PC-3 (cell line): ENCODE measurements at regions of chr1 and their contacts with region 1.

Region 1: DNA sequence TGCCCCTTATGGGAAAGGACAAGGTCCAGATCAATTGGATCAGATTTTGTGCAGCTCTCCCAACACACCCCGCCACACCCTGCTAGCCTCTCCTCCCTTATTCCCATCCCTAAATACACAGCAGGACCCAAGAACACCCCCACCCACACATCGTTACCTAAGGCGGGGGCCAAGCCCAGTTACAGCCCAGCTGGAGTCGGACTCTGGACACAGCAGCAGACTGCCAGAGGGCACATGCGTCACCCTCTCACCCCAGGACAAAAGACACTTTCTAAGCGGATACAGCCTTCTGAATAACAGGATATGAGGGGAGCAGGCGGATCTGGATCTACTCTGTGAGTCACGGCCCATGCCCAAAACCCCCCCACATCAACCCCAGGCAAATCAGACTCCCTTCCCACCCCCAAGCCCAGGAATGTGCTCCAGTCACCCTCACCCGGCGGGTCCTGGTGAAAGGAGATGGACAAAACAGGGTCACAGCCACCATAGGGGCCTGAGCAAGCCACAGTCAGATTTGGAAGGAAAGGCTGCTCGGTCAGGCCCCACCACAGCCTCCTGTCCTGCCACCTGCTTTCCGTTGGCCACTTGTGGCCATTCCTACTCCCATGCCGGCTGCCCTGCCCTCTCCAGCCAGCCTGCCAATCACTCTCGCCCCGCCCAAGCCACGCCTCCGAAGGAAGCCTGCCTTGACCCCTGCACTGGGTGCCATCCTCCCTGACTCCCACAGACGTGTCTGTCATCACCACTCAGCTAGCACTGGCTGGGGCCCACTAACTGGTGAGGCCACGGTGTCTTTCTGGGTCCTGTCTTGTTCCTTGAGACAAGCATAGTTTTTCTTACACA is 4.0 kb downstream of the S100A16 start:
- DNase-seq: peak; percentile 99
- ATAC-seq: peak; percentile 58
- H3K4me3 ChIP-seq: peak overlapping the region; percentile 68
- H3K27ac ChIP-seq: peak overlapping the region; percentile 100
- H3K4me1 ChIP-seq: peaks cover 50% of the 10 kb centered on the region
- H3K27me3 ChIP-seq: no peaks in the 10 kb centered on the region
- CTCF ChIP-seq: no peak

Region 2: DNA sequence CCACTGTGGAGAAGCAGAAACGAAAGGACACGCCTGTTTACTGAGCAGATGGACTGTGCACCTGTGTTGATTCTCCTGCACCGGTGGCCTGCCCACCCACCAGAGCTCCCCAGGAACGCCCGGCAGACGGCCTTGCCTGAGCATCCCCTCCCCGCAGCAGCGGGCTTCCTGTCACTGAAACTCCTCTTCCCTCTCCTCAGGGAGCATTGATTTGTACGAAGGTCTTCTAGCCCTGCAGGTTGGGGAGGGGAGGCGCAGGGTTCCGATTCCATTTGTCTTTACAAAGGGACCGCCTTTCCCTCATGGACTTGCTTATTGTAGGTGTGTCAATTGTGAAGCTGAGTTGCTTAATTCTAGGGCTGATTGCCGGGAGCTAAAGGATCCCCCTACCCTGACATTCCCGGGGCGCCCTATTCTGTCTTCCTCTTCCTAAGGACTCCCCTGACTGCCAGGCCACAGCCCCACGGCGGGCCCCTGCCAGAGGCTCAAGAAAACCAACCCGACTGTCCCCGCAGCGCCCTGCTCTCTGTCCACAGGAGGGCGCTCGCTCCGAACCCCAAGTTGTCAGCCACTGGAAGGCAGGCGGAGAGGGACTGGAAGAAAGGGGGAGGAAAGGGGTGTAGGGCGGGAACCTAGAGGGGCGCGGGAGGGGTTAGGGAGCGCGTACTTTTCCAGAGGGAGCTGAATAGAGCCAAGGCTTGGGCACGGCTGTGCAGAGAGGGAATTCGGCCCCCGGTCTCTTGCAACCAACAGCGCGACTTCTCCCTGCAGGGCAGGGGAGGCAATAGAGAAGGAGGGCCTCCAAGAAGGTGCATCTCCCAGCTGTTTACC is 76.0 kb before region 1 on chr1:
- CTCF ChIA-PET with region 1: no interaction called
- POLR2A ChIA-PET with region 1: interaction called, 7 read pairs
- intact Hi-C with region 1: loop called (anchors 2 kb)
- DNase-seq: peak; percentile 87
- ATAC-seq: peak; percentile 21
- H3K4me3 ChIP-seq: peak overlapping the region; percentile 28; the same call in 1 of the 2 replicates
- H3K27ac ChIP-seq: peak overlapping the region; percentile 94
- H3K4me1 ChIP-seq: peaks cover 46% of the 10 kb centered on the region
- H3K27me3 ChIP-seq: no peaks in the 10 kb centered on the region
- CTCF ChIP-seq: peak; percentile 96

Region 3: GRCh38 chr1:153598309-153599172 is 10.4 kb before region 1 on chr1:
- CTCF ChIA-PET with region 1: no interaction called
- POLR2A ChIA-PET with region 1: interaction called, 18 read pairs
- intact Hi-C with region 1: no loop called
- DNase-seq: no peak
- ATAC-seq: peak; percentile 26
- H3K4me3 ChIP-seq: no peak overlapping the region
- H3K27ac ChIP-seq: no peak overlapping the region
- H3K4me1 ChIP-seq: no peaks in the 10 kb centered on the region
- H3K27me3 ChIP-seq: no peaks in the 10 kb centered on the region
- CTCF ChIP-seq: no peak

Region 4: DNA sequence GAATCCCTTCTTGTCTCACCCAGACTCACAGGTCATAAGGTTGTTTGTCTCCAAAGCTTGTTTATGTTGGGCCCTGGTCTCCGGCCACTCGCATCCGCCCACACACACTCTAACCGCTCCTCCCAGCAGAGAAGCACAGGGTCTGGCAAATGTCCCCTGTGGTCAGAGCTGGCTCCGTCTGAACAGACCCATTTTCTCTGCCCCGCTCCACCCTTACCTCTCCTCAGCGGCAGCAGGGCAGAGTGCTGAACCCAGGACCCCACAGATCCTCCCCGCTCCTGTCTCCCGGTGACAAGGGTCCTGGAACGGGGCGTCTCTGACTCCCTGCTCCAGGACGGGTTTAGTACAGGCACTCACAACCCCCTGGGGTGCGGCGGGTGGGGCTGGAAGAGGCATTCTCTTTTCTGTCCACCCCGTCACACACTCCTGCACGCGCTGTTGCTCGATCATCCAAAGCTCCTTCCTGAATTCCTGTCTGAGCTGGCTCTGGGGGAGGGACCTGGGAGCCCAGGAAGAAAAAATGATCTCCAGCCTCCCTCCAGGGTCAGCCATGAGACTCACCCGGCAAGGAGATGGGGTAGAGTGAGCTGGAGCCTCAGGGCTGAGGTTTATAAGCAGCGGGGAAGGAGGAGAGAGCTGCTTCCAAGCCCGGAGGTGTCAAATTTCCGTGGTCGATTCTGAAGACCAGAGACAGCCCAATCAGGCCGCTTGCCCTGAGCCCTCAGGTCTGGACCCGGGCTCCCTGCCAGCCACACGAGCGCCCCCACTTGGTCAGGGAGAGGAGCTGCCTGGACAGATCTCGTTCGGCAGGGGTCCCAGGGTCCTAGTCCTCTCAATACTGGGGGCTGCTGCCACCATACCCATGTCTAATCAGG is 18.2 kb after region 1 on chr1 and contains the start of gene S100A13:
- CTCF ChIA-PET with region 1: interaction called, 17 read pairs
- POLR2A ChIA-PET with region 1: interaction called, 25 read pairs
- intact Hi-C with region 1: loop called (anchors 2 kb)
- DNase-seq: peak; percentile 97
- ATAC-seq: peak; percentile 88
- H3K4me3 ChIP-seq: peak within 1 kb of the TSS; percentile 84
- H3K27ac ChIP-seq: peak within 1 kb of the TSS; percentile 79
- H3K4me1 ChIP-seq: peaks cover 33% of the 10 kb centered on the region
- H3K27me3 ChIP-seq: no peaks in the 10 kb centered on the region
- CTCF ChIP-seq: peak; percentile 95
- total RNA-seq, gene S100A13: 307 and 350 TPM in 2 replicates

Region 5: GRCh38 chr1:153670859-153671627 is 62.1 kb after region 1 on chr1 and contains the start of gene ILF2:
- CTCF ChIA-PET with region 1: no interaction called
- POLR2A ChIA-PET with region 1: no interaction called
- intact Hi-C with region 1: loop called (anchors 2 kb)
- DNase-seq: peak; percentile 100
- ATAC-seq: peak; percentile 87
- H3K4me3 ChIP-seq: peak within 1 kb of the TSS; percentile 89
- H3K27ac ChIP-seq: peak within 1 kb of the TSS; percentile 52
- H3K4me1 ChIP-seq: peaks cover 17% of the 10 kb centered on the region
- H3K27me3 ChIP-seq: no peaks in the 10 kb centered on the region
- CTCF ChIP-seq: peak; percentile 54
- total RNA-seq, gene ILF2: 398 and 439 TPM in 2 replicates

Region 6: GRCh38 chr1:153946622-153947241 is 337.8 kb after region 1 on chr1 and contains the start of gene DENND4B:
- CTCF ChIA-PET with region 1: no interaction called
- POLR2A ChIA-PET with region 1: no interaction called
- intact Hi-C with region 1: no loop called
- DNase-seq: peak; percentile 86
- ATAC-seq: peak; percentile 88
- H3K4me3 ChIP-seq: peak within 1 kb of the TSS; percentile 81
- H3K27ac ChIP-seq: peak within 1 kb of the TSS; percentile 43
- H3K4me1 ChIP-seq: peaks cover 13% of the 10 kb centered on the region
- H3K27me3 ChIP-seq: no peaks in the 10 kb centered on the region
- CTCF ChIP-seq: peak; percentile 90
- total RNA-seq, gene DENND4B: 27.3 and 38.0 TPM in 2 replicates